CD4-positive, alpha-beta T cell (primary cell): ENCODE measurements at regions of chr12 and their contacts with region 1.

Region 1: DNA sequence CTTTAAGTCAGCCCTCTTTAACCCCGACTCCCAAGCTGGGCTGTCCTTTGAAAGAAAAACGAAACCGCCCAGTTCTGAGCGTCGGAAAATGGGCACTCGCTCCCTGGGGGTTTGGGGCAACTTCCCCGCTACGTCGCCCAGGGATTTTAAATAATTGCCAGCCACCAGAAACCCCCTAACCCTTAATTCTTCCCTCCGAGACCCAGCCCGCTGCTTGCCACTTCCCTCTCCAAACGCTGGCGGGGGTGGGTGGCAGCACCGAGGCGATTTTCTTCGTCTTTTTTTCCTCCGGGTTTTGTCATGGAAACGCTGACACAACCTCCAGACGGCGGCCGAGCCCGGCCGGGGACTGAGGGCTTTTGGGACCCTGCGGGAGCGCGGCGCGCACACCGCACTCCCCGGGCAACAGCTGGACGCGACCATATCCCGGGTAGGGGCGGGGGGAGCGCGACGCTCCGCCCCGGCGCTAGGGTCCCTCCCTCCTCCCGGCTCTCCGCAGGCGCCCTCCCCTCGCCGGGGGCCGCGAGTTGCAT is at the start of gene CHST11:
- DNase-seq: peak; percentile 53 to 89 (median 69)
- ATAC-seq: peak; percentile 60
- H3K4me3 ChIP-seq: peak within 1 kb of the TSS; percentile 100
- H3K4me3 Mint-ChIP-seq: peak within 1 kb of the TSS; percentile 99
- H3K27ac ChIP-seq: peak within 1 kb of the TSS; percentile 49 to 78
- H3K27ac Mint-ChIP-seq: peak within 1 kb of the TSS; percentile 86
- H3K4me1 ChIP-seq: peaks cover 27% of the 10 kb centered on the region
- H3K4me1 Mint-ChIP-seq: peaks cover 45% of the 10 kb centered on the region
- H3K27me3 ChIP-seq: no peaks in the 10 kb centered on the region
- H3K27me3 Mint-ChIP-seq: no peaks in the 10 kb centered on the region
- CTCF ChIP-seq: no peak
- total RNA-seq, gene CHST11: 53.4 to 53.6 TPM

Region 2: DNA sequence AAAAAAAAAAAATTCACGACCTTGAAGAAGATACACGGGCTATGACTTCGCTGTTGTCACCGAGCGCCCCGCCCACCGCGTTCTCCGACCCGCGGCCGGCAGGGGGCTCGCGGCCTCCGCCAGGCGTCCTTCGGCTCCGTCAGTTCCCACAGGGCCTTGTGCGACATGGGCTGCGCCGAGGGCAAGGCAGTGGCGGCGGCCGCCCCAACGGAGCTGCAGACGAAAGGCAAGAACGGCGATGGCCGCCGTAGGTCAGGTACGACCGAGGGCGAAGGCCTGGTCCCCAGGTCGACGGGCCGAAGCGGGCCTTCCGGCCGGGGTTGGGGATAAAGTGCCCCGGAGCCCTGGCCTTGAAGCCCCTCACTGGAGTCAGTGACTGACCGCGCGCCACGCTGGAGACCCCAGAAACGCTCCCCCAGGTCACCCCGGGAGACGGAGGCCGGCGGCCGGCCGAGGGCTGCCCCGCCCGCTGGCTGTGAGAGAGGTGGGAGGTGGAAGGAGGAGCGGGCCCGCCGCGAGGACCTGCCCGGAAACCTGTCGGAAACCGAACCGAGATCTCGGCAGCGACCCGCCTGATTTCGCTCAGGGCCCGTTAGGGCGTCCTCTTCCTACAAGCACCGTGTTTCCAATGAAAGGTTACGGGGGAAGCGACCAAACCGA is 240.7 kb before region 1 on chr12 and contains the start of gene TXNRD1:
- CTCF ChIA-PET with region 1: no interaction called
- POLR2A ChIA-PET with region 1: no interaction called
- intact Hi-C with region 1: loop called in 1 of 2 experiments (anchors 10 kb)
- DNase-seq: peak; percentile 68 to 93 (median 82)
- ATAC-seq: peak; percentile 87
- H3K4me3 ChIP-seq: peak within 1 kb of the TSS; percentile 67
- H3K4me3 Mint-ChIP-seq: peak within 1 kb of the TSS; percentile 88
- H3K27ac ChIP-seq: no peak within 1 kb of the TSS
- H3K27ac Mint-ChIP-seq: peak within 1 kb of the TSS; percentile 20
- H3K4me1 ChIP-seq: peaks cover 18% of the 10 kb centered on the region
- H3K4me1 Mint-ChIP-seq: peaks cover 30% of the 10 kb centered on the region
- H3K27me3 ChIP-seq: no peaks in the 10 kb centered on the region
- H3K27me3 Mint-ChIP-seq: no peaks in the 10 kb centered on the region
- CTCF ChIP-seq: peak; percentile 91
- total RNA-seq, gene TXNRD1: 24.6 to 27.2 TPM

Region 3: GRCh38 chr12:104352106-104352713 is 104.3 kb before region 1 on chr12:
- CTCF ChIA-PET with region 1: no interaction called
- POLR2A ChIA-PET with region 1: no interaction called
- intact Hi-C with region 1: no loop called
- DNase-seq: no peak
- ATAC-seq: no peak
- H3K4me3 ChIP-seq: no peak overlapping the region
- H3K4me3 Mint-ChIP-seq: no peak overlapping the region
- H3K27ac ChIP-seq: no peak overlapping the region
- H3K27ac Mint-ChIP-seq: no peak overlapping the region
- H3K4me1 ChIP-seq: no peaks in the 10 kb centered on the region
- H3K4me1 Mint-ChIP-seq: no peaks in the 10 kb centered on the region
- H3K27me3 ChIP-seq: no peaks in the 10 kb centered on the region
- H3K27me3 Mint-ChIP-seq: no peaks in the 10 kb centered on the region
- CTCF ChIP-seq: no peak

Region 4: GRCh38 chr12:104473374-104473983 is 17.0 kb after region 1 on chr12:
- CTCF ChIA-PET with region 1: interaction called, 14 read pairs
- POLR2A ChIA-PET with region 1: interaction called, 56 read pairs
- intact Hi-C with region 1: no loop called
- DNase-seq: no peak
- ATAC-seq: no peak
- H3K4me3 ChIP-seq: no peak overlapping the region
- H3K4me3 Mint-ChIP-seq: peak overlapping the region; percentile 68
- H3K27ac ChIP-seq: peak overlapping the region in 1 of 2 donors; percentile 46
- H3K27ac Mint-ChIP-seq: peak overlapping the region; percentile 57
- H3K4me1 ChIP-seq: peaks cover 56% of the 10 kb centered on the region
- H3K4me1 Mint-ChIP-seq: peaks cover 87% of the 10 kb centered on the region
- H3K27me3 ChIP-seq: no peaks in the 10 kb centered on the region
- H3K27me3 Mint-ChIP-seq: no peaks in the 10 kb centered on the region
- CTCF ChIP-seq: no peak

Region 5: GRCh38 chr12:104494137-104494792 is 37.8 kb after region 1 on chr12:
- CTCF ChIA-PET with region 1: interaction called, 7 read pairs
- POLR2A ChIA-PET with region 1: interaction called, 32 read pairs
- intact Hi-C with region 1: loop called in 1 of 2 experiments (anchors 1 kb)
- DNase-seq: peak in 12 of 14 experiments; percentile 32 to 67 (median 50)
- ATAC-seq: peak; percentile 48
- H3K4me3 ChIP-seq: peak overlapping the region; percentile 29
- H3K4me3 Mint-ChIP-seq: peak overlapping the region; percentile 80
- H3K27ac ChIP-seq: peak overlapping the region; percentile 58 to 64
- H3K27ac Mint-ChIP-seq: peak overlapping the region; percentile 95
- H3K4me1 ChIP-seq: peaks cover 65% of the 10 kb centered on the region
- H3K4me1 Mint-ChIP-seq: peaks cover 91% of the 10 kb centered on the region
- H3K27me3 ChIP-seq: no peaks in the 10 kb centered on the region
- H3K27me3 Mint-ChIP-seq: no peaks in the 10 kb centered on the region
- CTCF ChIP-seq: no peak

Region 6: DNA sequence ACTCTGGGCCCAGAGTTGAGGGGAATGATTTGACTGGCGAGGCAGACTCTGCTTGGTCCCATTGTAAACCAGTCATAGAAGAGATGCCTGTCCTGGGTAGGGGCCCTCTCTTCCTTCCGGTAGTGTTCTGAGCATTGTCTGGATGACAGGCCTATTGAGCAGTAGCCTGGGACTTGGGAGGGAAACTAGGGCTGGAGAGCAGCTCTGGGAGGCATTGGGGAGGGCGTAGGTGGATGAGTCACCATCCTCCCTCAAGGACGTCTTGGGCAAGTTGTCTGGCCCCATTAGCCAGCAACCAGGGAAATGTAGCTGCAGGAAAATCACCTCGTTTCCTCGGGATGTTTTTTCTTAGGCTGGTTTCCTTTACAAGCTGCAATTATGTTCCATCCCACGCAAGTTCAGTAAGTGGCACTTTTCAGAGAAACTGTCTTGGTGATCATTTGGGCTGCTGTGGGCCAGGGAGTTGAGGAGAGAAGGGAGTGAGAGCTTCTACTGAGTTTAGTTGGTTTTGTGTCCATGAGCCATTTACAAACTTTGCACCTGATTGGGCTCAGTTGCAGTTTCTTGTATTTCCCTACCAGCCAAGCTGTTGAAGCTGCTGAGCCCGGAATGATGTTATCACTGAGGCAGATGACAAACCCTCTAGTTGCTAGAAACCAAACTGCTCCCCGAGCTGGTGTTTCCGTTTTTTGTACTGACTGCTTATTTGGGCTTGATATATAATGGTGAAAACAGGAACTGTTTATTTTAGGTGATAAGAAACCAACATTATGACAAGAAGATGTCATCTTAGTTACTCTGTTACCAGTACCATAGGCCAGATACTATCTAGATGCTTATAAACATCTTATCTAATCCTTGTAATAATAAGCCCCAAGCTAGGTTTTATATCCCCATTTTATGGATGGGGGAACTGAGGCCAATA is 147.8 kb after region 1 on chr12:
- CTCF ChIA-PET with region 1: interaction called, 3 read pairs
- POLR2A ChIA-PET with region 1: interaction called, 10 read pairs
- intact Hi-C with region 1: no loop called
- DNase-seq: peak in 11 of 14 experiments; percentile 5 to 77 (median 20)
- ATAC-seq: peak; percentile 85
- H3K4me3 ChIP-seq: peak overlapping the region; percentile 3
- H3K4me3 Mint-ChIP-seq: peak overlapping the region; percentile 11
- H3K27ac ChIP-seq: peak overlapping the region; percentile 6 to 48
- H3K27ac Mint-ChIP-seq: peak overlapping the region; percentile 81
- H3K4me1 ChIP-seq: peaks cover 39% of the 10 kb centered on the region
- H3K4me1 Mint-ChIP-seq: peaks cover 58% of the 10 kb centered on the region
- H3K27me3 ChIP-seq: no peaks in the 10 kb centered on the region
- H3K27me3 Mint-ChIP-seq: no peaks in the 10 kb centered on the region
- CTCF ChIP-seq: no peak

Region 7: GRCh38 chr12:104720339-104721038 is 264.0 kb after region 1 on chr12:
- CTCF ChIA-PET with region 1: no interaction called
- POLR2A ChIA-PET with region 1: interaction called, 15 read pairs
- intact Hi-C with region 1: loop called in 1 of 2 experiments (anchors 2 kb)
- DNase-seq: peak; percentile 52 to 93 (median 64)
- ATAC-seq: peak; percentile 78
- H3K4me3 ChIP-seq: peak overlapping the region; percentile 54
- H3K4me3 Mint-ChIP-seq: peak overlapping the region; percentile 73
- H3K27ac ChIP-seq: peak overlapping the region; percentile 77 to 87
- H3K27ac Mint-ChIP-seq: peak overlapping the region; percentile 89
- H3K4me1 ChIP-seq: peaks cover 49% of the 10 kb centered on the region
- H3K4me1 Mint-ChIP-seq: peaks cover 72% of the 10 kb centered on the region
- H3K27me3 ChIP-seq: no peaks in the 10 kb centered on the region
- H3K27me3 Mint-ChIP-seq: no peaks in the 10 kb centered on the region
- CTCF ChIP-seq: no peak